ENCODE measurements at regions of chr3 and their contacts with region 1.

Region 1: GRCh38 chr3:12841149-12841970 is at the start of gene RPL32:
- DNase-seq: peak; percentile 88
- ATAC-seq: peak; percentile 87
- H3K4me3 ChIP-seq: peak within 1 kb of the TSS; percentile 98
- H3K27ac ChIP-seq: peak within 1 kb of the TSS; percentile 90
- H3K4me1 ChIP-seq: peaks cover 8% of the 10 kb centered on the region; the same call in 1 of the 2 replicates
- H3K27me3 ChIP-seq: no peaks in the 10 kb centered on the region
- CTCF ChIP-seq: peak; percentile 74 to 88 (median 86)
- EP300 ChIP-seq: peak in 1 of 2 experiments; percentile 5; a peak in 1 of 4 replicates
- POLR2A ChIP-seq: peak; percentile 98
- RAD21 ChIP-seq: peak; percentile 37
- polyA plus RNA-seq, gene RPL32: 3,252 to 3,662 TPM

Region 2: GRCh38 chr3:12706504-12707253 is 134.7 kb before region 1 on chr3:
- CTCF ChIA-PET with region 1: interaction called, 14 read pairs
- POLR2A ChIA-PET with region 1: no interaction called
- RAD21 ChIA-PET with region 1: no interaction called
- SMC1A ChIA-PET with region 1: interaction called, 6 read pairs
- in situ Hi-C with region 1: no loop called
- intact Hi-C with region 1: no loop called
- DNase-seq: peak; percentile 45
- ATAC-seq: peak; percentile 100
- H3K4me3 ChIP-seq: no peak overlapping the region
- H3K27ac ChIP-seq: no peak overlapping the region
- H3K4me1 ChIP-seq: no peaks in the 10 kb centered on the region
- H3K27me3 ChIP-seq: no peaks in the 10 kb centered on the region; a peak in 1 of 4 replicates
- CTCF ChIP-seq: peak; percentile 85 to 94 (median 93)
- EP300 ChIP-seq: no peak
- POLR2A ChIP-seq: no peak
- RAD21 ChIP-seq: peak; percentile 73

Region 3: DNA sequence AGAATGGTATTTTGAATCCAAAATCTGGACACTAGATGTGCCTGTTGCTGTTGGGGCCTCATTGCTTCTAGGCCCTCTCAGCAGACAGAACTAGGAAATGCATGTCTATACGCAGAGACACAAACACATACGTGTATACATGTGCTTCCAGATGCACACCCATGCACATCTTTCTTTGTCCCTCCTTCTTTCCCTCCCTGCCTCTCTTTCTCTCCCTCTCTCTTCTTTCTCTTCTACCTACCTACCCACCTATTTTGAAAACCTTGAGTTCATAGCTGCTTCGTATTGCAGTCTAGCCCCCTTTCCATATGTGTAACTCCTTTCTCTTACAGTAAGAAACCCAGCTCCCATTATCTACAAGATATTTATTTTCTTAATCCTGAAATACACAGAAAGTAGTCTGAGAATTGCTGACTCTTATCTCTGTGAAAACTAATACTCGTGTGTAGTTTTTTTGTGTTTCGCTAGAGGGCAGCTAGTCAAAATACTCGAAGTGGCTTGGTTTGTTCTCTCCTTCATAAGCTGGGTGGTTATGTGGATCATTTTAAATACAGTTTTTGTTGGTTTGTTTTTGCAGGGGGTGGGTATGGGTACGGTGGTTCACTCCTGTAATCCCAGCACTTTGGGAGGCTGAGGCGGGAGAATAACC is 18.5 kb before region 1 on chr3:
- CTCF ChIA-PET with region 1: interaction called, 17 read pairs
- POLR2A ChIA-PET with region 1: interaction called, 5 read pairs
- RAD21 ChIA-PET with region 1: interaction called, 3 read pairs
- SMC1A ChIA-PET with region 1: interaction called, 4 read pairs
- in situ Hi-C with region 1: no loop called
- intact Hi-C with region 1: no loop called
- DNase-seq: no peak
- ATAC-seq: peak; percentile 85
- H3K4me3 ChIP-seq: no peak overlapping the region
- H3K27ac ChIP-seq: no peak overlapping the region
- H3K4me1 ChIP-seq: no peaks in the 10 kb centered on the region
- H3K27me3 ChIP-seq: no peaks in the 10 kb centered on the region
- CTCF ChIP-seq: peak; percentile 39 to 46 (median 46); a peak in 5 of 6 replicates
- EP300 ChIP-seq: no peak
- POLR2A ChIP-seq: no peak
- RAD21 ChIP-seq: 0 out of 2 replicates have a peak, but pooled peaks have one; percentile 6

Region 4: GRCh38 chr3:12884186-12884680 is 42.9 kb after region 1 on chr3:
- CTCF ChIA-PET with region 1: interaction called, 27 read pairs
- POLR2A ChIA-PET with region 1: interaction called, 3 read pairs
- RAD21 ChIA-PET with region 1: interaction called, 5 read pairs
- SMC1A ChIA-PET with region 1: no interaction called
- in situ Hi-C with region 1: no loop called
- intact Hi-C with region 1: no loop called
- DNase-seq: no peak
- ATAC-seq: no peak
- H3K4me3 ChIP-seq: no peak overlapping the region
- H3K27ac ChIP-seq: no peak overlapping the region
- H3K4me1 ChIP-seq: peaks cover 45% of the 10 kb centered on the region
- H3K27me3 ChIP-seq: no peaks in the 10 kb centered on the region
- CTCF ChIP-seq: no peak
- EP300 ChIP-seq: no peak
- POLR2A ChIP-seq: no peak
- RAD21 ChIP-seq: no peak

Region 5: GRCh38 chr3:12901623-12902045 is 60.3 kb after region 1 on chr3:
- CTCF ChIA-PET with region 1: no interaction called
- POLR2A ChIA-PET with region 1: no interaction called
- RAD21 ChIA-PET with region 1: no interaction called
- SMC1A ChIA-PET with region 1: no interaction called
- in situ Hi-C with region 1: no loop called
- intact Hi-C with region 1: no loop called
- DNase-seq: no peak
- ATAC-seq: peak; percentile 61
- H3K4me3 ChIP-seq: no peak overlapping the region
- H3K27ac ChIP-seq: no peak overlapping the region
- H3K4me1 ChIP-seq: no peaks in the 10 kb centered on the region
- H3K27me3 ChIP-seq: no peaks in the 10 kb centered on the region
- CTCF ChIP-seq: peak in 2 of 3 experiments; percentile 10 to 27; a peak in 1 of 6 replicates
- EP300 ChIP-seq: no peak
- POLR2A ChIP-seq: no peak
- RAD21 ChIP-seq: no peak